A673 (cell line): ENCODE measurements at regions of chr18 and their contacts with region 1.

Region 1: DNA sequence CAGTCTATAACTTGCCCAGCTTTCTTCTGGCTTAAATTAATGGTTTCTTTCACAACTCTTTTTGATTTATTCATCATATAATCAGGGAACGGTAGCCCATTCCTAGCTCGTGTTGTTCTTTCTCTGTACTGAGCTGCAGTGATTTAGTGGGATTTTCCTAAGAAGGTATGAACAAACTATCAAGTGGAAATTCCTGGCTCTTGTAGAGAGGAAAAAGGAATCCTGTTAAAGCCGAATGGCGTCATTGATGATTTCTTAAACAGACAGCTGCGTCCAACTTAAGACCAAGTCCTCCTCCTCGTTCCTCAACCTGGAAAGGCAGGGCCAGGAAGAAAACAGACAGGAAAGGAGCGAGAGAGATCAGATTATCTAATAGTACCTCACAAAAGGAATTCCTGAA is 69.2 kb upstream of the CABLES1 start:
- DNase-seq: no peak
- H3K4me3 ChIP-seq: no peak overlapping the region
- H3K27ac ChIP-seq: no peak overlapping the region
- H3K4me1 ChIP-seq: no peaks in the 10 kb centered on the region
- H3K27me3 ChIP-seq: no peaks in the 10 kb centered on the region
- CTCF ChIP-seq: no peak

Region 2: DNA sequence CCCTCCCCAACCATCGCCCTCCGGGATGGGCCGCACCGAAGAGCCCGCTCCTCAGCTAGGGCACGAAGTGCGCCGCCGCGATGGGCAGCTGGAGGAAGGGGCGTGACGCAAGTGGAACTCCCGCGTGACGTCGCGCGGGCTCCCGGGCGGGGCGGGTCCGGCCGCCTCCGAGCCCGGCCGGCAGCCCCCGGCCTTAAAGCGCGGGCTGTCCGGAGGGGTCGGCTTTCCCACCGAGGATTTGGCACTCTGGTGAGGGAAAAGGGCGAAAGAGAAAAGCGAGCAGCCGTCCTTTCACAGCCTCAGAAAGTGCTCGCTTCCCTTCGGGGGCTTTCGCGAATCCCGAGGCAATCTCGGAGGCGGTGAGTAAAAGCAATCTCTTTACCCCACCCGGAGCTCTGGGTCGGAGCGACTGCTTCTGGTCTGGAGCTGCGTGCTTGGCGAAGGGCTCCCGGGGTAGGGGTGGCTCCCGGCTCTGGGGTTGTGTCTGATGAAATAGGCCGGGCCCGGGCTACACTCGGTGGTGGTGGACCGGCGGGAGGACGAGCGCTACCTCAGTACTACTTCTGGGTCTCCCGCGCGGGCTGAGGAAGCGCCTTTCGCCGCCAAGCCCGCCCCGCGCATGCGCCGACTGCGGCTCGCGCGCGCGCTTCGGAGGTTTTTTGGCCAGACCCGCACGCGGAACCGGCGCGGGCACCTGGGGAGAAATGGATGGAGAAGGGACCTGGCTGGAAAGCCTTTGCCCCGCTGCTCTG is 132.7 kb before region 1 on chr18 and contains the start of gene RBBP8:
- CTCF ChIA-PET with region 1: no interaction called
- POLR2A ChIA-PET with region 1: no interaction called
- intact Hi-C with region 1: no loop called
- DNase-seq: peak; percentile 92
- H3K4me3 ChIP-seq: peak within 1 kb of the TSS; percentile 88
- H3K27ac ChIP-seq: peak within 1 kb of the TSS; percentile 98
- H3K4me1 ChIP-seq: peaks cover 12% of the 10 kb centered on the region
- H3K27me3 ChIP-seq: no peaks in the 10 kb centered on the region
- CTCF ChIP-seq: no peak
- total RNA-seq, gene RBBP8: 75.8 and 88.2 TPM in 2 replicates

Region 3: GRCh38 chr18:23020555-23021294 is 45.3 kb before region 1 on chr18:
- CTCF ChIA-PET with region 1: no interaction called
- POLR2A ChIA-PET with region 1: no interaction called
- intact Hi-C with region 1: no loop called
- DNase-seq: no peak
- H3K4me3 ChIP-seq: no peak overlapping the region
- H3K27ac ChIP-seq: no peak overlapping the region
- H3K4me1 ChIP-seq: no peaks in the 10 kb centered on the region
- H3K27me3 ChIP-seq: no peaks in the 10 kb centered on the region
- CTCF ChIP-seq: no peak

Region 4: DNA sequence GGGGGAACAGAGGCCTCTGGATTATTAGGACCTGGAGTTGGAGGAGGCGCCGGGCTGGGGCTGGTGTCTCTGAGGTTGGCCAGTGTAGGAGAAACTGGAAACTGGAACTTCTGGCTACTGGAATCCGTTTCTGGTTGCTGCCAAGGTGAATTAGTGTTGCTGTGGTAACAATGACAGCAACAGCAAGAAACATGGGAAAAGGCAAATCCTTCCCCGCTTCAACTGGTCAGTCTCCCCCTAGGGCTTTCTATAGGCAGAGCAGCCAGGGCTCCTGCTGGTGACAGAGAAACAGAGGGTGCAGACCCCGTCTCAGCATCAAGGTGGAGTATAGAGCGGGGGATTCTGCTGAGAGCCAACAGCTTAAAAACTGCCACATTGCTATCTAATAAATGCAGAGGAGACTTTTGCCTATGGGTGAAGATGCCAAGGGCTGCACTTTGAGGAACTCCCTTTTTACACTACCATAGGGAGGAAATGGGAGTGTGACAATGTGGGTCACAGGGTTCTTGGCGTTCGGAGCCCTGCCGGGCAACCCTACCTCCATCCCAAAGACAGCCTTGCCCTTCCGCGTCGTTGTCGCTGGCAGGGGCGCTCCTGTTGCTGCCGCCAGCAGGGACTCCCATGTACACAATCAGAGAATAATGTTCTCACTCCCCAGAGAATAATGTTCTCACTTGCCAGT is 12.1 kb before region 1 on chr18:
- CTCF ChIA-PET with region 1: no interaction called
- POLR2A ChIA-PET with region 1: no interaction called
- intact Hi-C with region 1: loop called (anchors 1 kb)
- DNase-seq: peak; percentile 34
- H3K4me3 ChIP-seq: no peak overlapping the region
- H3K27ac ChIP-seq: no peak overlapping the region
- H3K4me1 ChIP-seq: no peaks in the 10 kb centered on the region
- H3K27me3 ChIP-seq: no peaks in the 10 kb centered on the region
- CTCF ChIP-seq: no peak

Region 5: DNA sequence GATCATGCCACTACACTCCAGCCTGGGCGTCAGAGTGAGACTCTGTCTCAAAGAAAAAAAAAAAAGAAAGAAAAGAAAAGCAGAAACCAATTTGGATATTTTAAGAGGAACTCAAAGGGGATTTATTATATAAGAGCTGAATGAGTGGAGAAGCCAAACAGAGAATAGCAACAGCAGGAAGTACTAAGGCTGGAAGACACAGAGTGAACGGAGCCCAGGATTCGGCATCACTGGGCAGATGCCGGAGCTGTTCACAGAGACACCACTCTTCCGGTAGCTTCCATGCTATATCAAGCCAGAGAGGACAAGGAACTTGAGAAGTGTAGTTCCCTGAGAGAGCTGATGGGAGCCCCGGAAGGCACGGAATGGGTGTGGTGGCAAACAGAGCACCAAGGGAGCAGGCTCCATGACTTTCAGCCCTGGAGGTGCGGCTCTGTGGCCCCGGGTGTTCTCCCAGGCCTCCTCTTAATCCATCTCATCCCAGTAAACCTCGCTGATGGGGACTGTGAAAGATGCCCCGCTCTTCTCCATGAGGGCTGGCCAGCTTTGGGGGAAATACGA is 22.3 kb after region 1 on chr18:
- CTCF ChIA-PET with region 1: no interaction called
- POLR2A ChIA-PET with region 1: no interaction called
- intact Hi-C with region 1: no loop called
- DNase-seq: no peak
- H3K4me3 ChIP-seq: no peak overlapping the region
- H3K27ac ChIP-seq: no peak overlapping the region
- H3K4me1 ChIP-seq: peaks cover 4% of the 10 kb centered on the region
- H3K27me3 ChIP-seq: no peaks in the 10 kb centered on the region
- CTCF ChIP-seq: no peak